ENCODE measurements at regions of chr10 and their contacts with region 1.

Region 1: DNA sequence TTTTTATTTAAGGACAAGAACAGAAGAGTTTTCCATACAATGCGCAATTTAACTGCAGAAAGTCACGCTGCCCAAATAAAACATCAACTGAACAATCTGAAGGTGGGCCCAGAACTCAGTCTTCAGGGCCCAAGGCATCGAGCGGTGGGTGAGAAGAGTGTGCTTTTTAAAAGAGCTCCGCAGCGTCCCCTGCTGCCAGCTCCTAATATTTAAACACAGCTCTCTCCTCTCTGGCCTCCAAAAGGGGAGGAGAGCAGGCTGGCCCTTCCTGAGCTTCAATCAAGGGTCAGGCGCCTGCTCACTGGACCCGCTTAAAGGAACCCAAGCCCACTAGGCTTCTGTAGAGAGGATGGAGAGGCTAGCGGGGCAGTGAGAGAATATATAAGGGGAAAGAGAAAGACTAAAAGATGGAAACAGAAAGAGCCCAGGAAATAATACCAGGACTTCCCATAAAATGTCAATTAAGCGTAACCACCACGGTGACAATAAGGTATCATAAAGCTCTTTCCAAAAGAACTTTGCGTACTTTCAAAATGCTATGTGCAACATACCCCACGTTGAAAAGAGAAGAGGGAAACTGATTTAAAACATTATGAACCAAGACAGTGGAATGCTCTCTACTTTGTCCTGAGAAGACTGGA is 2.8 kb downstream of the FAM53B start:
- DNase-seq: peak; percentile 87
- H3K4me3 ChIP-seq: peak overlapping the region; percentile 95
- H3K27ac ChIP-seq: peak overlapping the region; percentile 92
- H3K4me1 ChIP-seq: peaks cover 73% of the 10 kb centered on the region
- CTCF ChIP-seq: peak; percentile 90

Region 2: GRCh38 chr10:124418726-124419501 is 322.5 kb before region 1 on chr10 and contains the start of gene OAT:
- CTCF ChIA-PET with region 1: no interaction called
- POLR2A ChIA-PET with region 1: no interaction called
- intact Hi-C with region 1: loop called (anchors 2 kb)
- DNase-seq: peak; percentile 96
- H3K4me3 ChIP-seq: peak within 1 kb of the TSS; percentile 71
- H3K27ac ChIP-seq: no peak within 1 kb of the TSS
- H3K4me1 ChIP-seq: peaks cover 6% of the 10 kb centered on the region
- CTCF ChIP-seq: no peak
- total RNA-seq, gene OAT: 13.5 and 16.1 TPM in 2 replicates

Region 3: GRCh38 chr10:124530215-124530665 is 211.2 kb before region 1 on chr10:
- CTCF ChIA-PET with region 1: interaction called, 22 read pairs
- POLR2A ChIA-PET with region 1: interaction called, 32 read pairs
- intact Hi-C with region 1: loop called (anchors 1 kb)
- DNase-seq: peak; percentile 88
- H3K4me3 ChIP-seq: no peak overlapping the region
- H3K27ac ChIP-seq: no peak overlapping the region
- H3K4me1 ChIP-seq: peaks cover 50% of the 10 kb centered on the region
- CTCF ChIP-seq: peak; percentile 86

Region 4: GRCh38 chr10:124632064-124632531 is 109.3 kb before region 1 on chr10:
- CTCF ChIA-PET with region 1: interaction called, 4 read pairs
- POLR2A ChIA-PET with region 1: interaction called, 4 read pairs
- intact Hi-C with region 1: loop called (anchors 5 kb)
- DNase-seq: no peak
- H3K4me3 ChIP-seq: no peak overlapping the region
- H3K27ac ChIP-seq: no peak overlapping the region
- H3K4me1 ChIP-seq: peaks cover 23% of the 10 kb centered on the region
- CTCF ChIP-seq: peak; percentile 38; the same call in 1 of the 2 replicates

Region 5: GRCh38 chr10:124703778-124704427 is 37.5 kb before region 1 on chr10:
- CTCF ChIA-PET with region 1: interaction called, 17 read pairs
- POLR2A ChIA-PET with region 1: interaction called, 7 read pairs
- intact Hi-C with region 1: loop called (anchors 1 kb)
- DNase-seq: peak; percentile 94
- H3K4me3 ChIP-seq: peak overlapping the region; percentile 14
- H3K27ac ChIP-seq: peak overlapping the region; percentile 88
- H3K4me1 ChIP-seq: peaks cover 84% of the 10 kb centered on the region
- CTCF ChIP-seq: no peak

Region 6: GRCh38 chr10:124728071-124728829 is 13.2 kb before region 1 on chr10:
- CTCF ChIA-PET with region 1: interaction called, 3 read pairs
- POLR2A ChIA-PET with region 1: interaction called, 29 read pairs
- intact Hi-C with region 1: no loop called
- DNase-seq: no peak
- H3K4me3 ChIP-seq: no peak overlapping the region
- H3K27ac ChIP-seq: peak overlapping the region; percentile 49
- H3K4me1 ChIP-seq: peaks cover 70% of the 10 kb centered on the region
- CTCF ChIP-seq: no peak

Region 7: DNA sequence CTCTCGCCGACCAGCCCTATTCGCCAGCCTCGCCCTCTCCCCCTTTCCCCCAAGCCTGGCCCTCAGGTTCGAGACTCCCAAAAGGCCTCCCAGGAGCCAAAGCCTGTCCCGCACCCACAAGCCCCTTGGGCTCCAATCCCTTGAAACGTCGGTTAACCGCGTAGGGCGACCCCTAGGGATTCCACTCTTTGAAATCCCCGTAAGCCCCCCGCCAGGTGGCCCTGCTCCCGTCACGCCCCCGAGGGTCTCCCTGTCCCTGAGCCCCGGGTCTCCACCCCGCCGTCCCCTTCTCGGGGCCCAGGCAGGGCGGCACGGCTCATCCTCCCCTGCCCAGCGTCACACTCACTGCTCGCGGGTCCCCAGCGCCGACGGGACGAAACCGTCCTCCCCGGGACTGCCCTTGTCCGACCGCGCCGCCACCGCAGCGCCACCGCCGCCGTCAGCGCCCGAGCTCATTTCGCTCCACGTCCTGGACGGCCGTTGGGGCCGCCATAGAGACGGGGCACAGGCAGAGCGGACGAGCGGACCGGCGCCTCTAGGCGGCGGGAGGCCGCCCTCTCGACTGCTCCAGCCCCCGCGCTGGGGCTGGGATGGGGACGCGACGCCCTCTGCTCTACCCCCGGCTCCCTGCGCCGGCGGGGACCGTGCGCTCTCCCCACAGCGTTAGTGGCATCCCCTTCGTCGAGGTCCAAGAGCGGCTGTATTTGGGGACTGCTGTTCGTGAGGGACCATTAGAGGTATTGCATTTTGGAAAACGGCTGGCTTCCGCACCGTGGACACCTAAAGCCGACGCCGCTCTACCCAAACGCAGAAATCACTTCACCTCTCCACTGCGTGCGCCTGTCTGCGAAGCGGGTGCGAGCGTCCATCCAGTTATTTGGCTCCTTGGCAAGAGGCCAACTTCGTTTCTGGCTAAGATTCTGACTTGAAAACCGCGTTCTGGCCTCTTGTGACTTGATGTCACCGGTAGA is 50.3 kb after region 1 on chr10 and contains the start of gene EEF1AKMT2:
- CTCF ChIA-PET with region 1: no interaction called
- POLR2A ChIA-PET with region 1: interaction called, 3 read pairs
- intact Hi-C with region 1: loop called (anchors 2 kb)
- DNase-seq: peak; percentile 92
- H3K4me3 ChIP-seq: peak within 1 kb of the TSS; percentile 80
- H3K27ac ChIP-seq: peak within 1 kb of the TSS; percentile 81
- H3K4me1 ChIP-seq: peaks cover 13% of the 10 kb centered on the region
- CTCF ChIP-seq: peak; percentile 69
- total RNA-seq, gene EEF1AKMT2: 27.5 and 37.7 TPM in 2 replicates

Region 8: DNA sequence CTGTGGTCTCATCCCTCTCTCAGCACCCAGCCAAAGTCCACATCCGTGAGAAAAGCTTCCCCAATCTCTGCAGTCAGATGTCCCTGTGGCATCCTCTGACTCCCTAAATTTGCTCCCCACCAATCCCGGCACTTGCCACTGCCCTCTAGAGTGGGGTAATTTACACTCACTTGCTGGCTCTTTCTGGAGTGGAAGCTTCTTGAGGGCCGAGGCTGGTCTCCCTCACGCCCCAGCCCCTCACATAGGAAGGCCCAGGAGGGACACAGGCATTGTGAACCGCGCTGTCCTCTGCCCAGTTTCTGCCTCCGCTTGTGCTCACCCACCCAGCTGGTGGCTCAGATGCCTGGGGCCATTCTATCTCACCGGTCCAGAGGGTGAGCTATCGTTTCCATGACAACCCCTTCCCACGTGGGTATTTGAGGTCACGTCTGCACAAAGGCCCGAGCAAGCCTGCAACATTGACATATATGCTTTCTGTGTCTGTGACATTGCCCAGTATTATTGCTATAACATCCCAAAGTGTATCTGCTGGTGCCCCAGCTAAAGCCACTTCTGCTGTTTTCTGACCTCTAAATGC is 516.2 kb after region 1 on chr10:
- CTCF ChIA-PET with region 1: no interaction called
- POLR2A ChIA-PET with region 1: no interaction called
- intact Hi-C with region 1: no loop called
- DNase-seq: no peak
- H3K4me3 ChIP-seq: no peak overlapping the region
- H3K27ac ChIP-seq: no peak overlapping the region
- H3K4me1 ChIP-seq: no peaks in the 10 kb centered on the region
- CTCF ChIP-seq: no peak

Region 9: DNA sequence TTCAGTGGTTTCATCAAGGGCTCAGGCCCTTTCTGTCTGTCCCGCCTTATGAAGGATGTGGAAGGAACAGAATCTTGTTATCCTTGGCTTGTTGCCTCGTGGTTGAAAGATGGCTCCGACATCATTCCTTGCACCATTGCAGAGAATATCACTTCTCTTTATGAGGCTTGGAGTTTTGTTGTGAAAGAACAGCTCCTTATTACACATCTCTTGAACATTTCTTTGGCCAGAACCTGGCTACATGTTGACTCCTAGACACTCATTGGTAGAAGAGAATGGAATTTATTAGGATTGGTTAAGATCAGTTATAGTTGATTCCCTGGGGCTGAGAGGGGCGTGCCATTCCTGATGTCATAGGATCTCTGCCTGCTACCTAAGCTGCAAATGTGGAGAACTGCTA is 599.5 kb after region 1 on chr10:
- CTCF ChIA-PET with region 1: no interaction called
- POLR2A ChIA-PET with region 1: no interaction called
- intact Hi-C with region 1: no loop called
- DNase-seq: no peak
- H3K4me3 ChIP-seq: no peak overlapping the region
- H3K27ac ChIP-seq: no peak overlapping the region
- H3K4me1 ChIP-seq: no peaks in the 10 kb centered on the region
- CTCF ChIP-seq: no peak

Measured in OCI-LY7 (cell line).